Naive thymus-derived CD4-positive, alpha-beta T cell (primary cell): ENCODE measurements at regions of chr21 and their contacts with region 1.

Region 1: GRCh38 chr21:37398697-37399096 is 32.1 kb downstream of the DYRK1A start:
- DNase-seq: peak in 7 of 9 donors; percentile 45 to 68 (median 57)
- ATAC-seq: peak; percentile 77
- H3K4me3 ChIP-seq: no peak overlapping the region
- H3K4me3 Mint-ChIP-seq: peak overlapping the region; percentile 63 to 83 (median 74)
- H3K27ac ChIP-seq: peak overlapping the region; percentile 14
- H3K27ac Mint-ChIP-seq: peak overlapping the region; percentile 5 to 86 (median 72)
- H3K4me1 ChIP-seq: peaks cover 36 to 54% of the 10 kb centered on the region in 2 donors
- H3K4me1 Mint-ChIP-seq: peaks cover 59 to 100% (median 83%) of the 10 kb centered on the region in 7 donors
- H3K27me3 ChIP-seq: no peaks in the 10 kb centered on the region
- H3K27me3 Mint-ChIP-seq: no peaks in the 10 kb centered on the region

Region 2: GRCh38 chr21:37374027-37374426 is 24.7 kb before region 1 on chr21:
- CTCF ChIA-PET with region 1: no interaction called
- POLR2A ChIA-PET with region 1: no interaction called
- intact Hi-C with region 1: loop called in 1 of 2 experiments (anchors 2 kb)
- DNase-seq: no peak
- ATAC-seq: no peak
- H3K4me3 ChIP-seq: no peak overlapping the region
- H3K4me3 Mint-ChIP-seq: peak overlapping the region; percentile 49 to 81 (median 64)
- H3K27ac ChIP-seq: peak overlapping the region; percentile 1
- H3K27ac Mint-ChIP-seq: peak overlapping the region in 5 of 9 donors; percentile 29 to 90 (median 57)
- H3K4me1 ChIP-seq: peaks cover 75 to 80% of the 10 kb centered on the region in 2 donors
- H3K4me1 Mint-ChIP-seq: peaks cover 75 to 97% (median 89%) of the 10 kb centered on the region in 7 donors
- H3K27me3 ChIP-seq: no peaks in the 10 kb centered on the region
- H3K27me3 Mint-ChIP-seq: no peaks in the 10 kb centered on the region

Region 3: GRCh38 chr21:37413553-37414291 is 15.0 kb after region 1 on chr21:
- CTCF ChIA-PET with region 1: no interaction called
- POLR2A ChIA-PET with region 1: no interaction called
- intact Hi-C with region 1: loop called in 1 of 2 experiments (anchors 2 kb)
- DNase-seq: no peak
- ATAC-seq: no peak
- H3K4me3 ChIP-seq: no peak overlapping the region
- H3K4me3 Mint-ChIP-seq: peak overlapping the region in 6 of 10 donors; percentile 0 to 64 (median 46)
- H3K27ac ChIP-seq: peak overlapping the region; percentile 23
- H3K27ac Mint-ChIP-seq: peak overlapping the region in 6 of 9 donors; percentile 23 to 79 (median 42)
- H3K4me1 ChIP-seq: peaks cover 32 to 59% of the 10 kb centered on the region in 2 donors
- H3K4me1 Mint-ChIP-seq: peaks cover 51 to 95% (median 91%) of the 10 kb centered on the region in 7 donors
- H3K27me3 ChIP-seq: no peaks in the 10 kb centered on the region
- H3K27me3 Mint-ChIP-seq: no peaks in the 10 kb centered on the region

Region 4: DNA sequence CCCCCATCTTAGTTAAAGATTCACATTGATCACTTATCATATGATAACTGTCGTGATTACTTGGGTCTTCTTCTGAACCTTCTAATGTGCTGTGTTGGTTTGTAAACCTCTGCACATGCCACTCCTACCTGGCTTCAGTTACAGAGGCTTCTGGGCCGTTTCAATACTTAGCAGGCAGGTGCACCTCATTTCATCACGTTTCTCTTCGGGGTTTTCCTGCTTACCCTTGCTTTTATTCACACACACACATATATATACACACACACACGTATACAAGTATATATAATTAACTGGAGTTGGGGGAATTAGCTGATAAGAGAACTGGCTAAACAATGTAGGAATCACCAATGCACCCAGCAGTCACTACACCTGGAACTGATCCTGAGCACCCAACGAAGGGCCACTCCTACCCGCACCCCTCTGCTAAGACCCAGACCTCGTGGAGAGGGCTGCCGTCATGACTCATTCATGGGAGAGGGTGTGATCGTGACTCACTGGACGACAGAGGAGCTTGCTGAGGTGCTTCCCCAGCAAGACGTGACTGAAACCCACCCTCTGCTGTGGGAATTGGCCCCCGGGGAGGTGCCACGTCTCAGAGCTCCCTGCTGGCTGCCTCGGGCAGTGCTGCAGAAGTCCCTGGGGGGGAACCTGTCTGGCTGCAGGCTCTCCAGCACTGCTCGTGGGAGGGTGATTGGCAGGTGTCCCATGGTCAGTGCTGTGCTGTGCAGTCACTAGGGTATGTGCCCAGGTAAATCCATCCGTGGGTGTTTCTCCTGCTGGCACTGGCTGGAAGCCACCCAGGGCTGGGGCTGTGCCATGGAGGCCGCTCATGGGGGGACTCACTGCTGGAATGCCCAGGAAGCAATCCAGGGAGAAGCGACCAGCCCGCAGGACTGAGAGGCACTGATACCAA is 134.4 kb after region 1 on chr21:
- CTCF ChIA-PET with region 1: no interaction called
- POLR2A ChIA-PET with region 1: no interaction called
- intact Hi-C with region 1: no loop called
- DNase-seq: no peak
- ATAC-seq: peak; percentile 36
- H3K4me3 ChIP-seq: no peak overlapping the region
- H3K4me3 Mint-ChIP-seq: no peak overlapping the region
- H3K27ac ChIP-seq: no peak overlapping the region
- H3K27ac Mint-ChIP-seq: no peak overlapping the region
- H3K4me1 ChIP-seq: no peaks in the 10 kb centered on the region
- H3K4me1 Mint-ChIP-seq: peaks cover 0 to 1% (median 0%) of the 10 kb centered on the region in 7 donors
- H3K27me3 ChIP-seq: no peaks in the 10 kb centered on the region
- H3K27me3 Mint-ChIP-seq: peaks cover 35 to 60% (median 54%) of the 10 kb centered on the region in 5 donors